GM12878 (cell line): ENCODE measurements at regions of chr12 and their contacts with region 1.

Region 1: DNA sequence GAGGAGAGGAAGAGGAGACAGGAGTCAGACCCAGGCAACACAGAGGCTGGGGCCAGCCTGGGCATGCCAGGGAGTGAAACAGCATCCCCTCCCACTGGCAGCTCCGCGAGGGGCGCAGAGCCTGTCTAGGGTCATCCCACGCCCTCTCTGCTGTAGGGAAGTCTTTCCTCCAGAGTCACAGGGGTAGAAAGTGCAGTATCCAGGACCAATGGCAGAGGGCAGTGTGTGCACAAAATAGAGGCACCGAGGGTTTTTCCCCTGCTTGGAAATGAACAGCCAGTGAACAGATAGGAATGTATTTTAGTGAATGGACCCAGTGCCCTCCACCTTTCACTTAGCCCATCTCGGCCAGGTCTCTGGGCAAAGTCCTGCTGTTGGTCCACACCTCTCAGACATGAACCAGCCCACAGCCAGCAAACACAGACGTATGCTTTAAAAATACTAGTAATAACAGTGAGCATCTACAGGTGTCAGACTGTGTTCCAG is 9.4 kb upstream of the KRT74 start:
- DNase-seq: no peak
- ATAC-seq: peak; percentile 90
- H3K4me3 ChIP-seq: no peak overlapping the region
- H3K27ac ChIP-seq: no peak overlapping the region
- H3K4me1 ChIP-seq: no peaks in the 10 kb centered on the region
- H3K27me3 ChIP-seq: peaks cover 0 to 5% of the 10 kb centered on the region in 2 experiments; a peak in 3 of 4 replicates
- CTCF ChIP-seq: peak; percentile 59 to 82 (median 66); a peak in 5 of 6 replicates
- EP300 ChIP-seq: no peak
- POLR2A ChIP-seq: no peak
- RAD21 ChIP-seq: peak; percentile 65

Region 2: GRCh38 chr12:52486166-52487105 is 96.6 kb before region 1 on chr12:
- CTCF ChIA-PET with region 1: no interaction called
- POLR2A ChIA-PET with region 1: no interaction called
- RAD21 ChIA-PET with region 1: no interaction called
- SMC1A ChIA-PET with region 1: no interaction called
- in situ Hi-C with region 1: no loop called
- intact Hi-C with region 1: no loop called
- DNase-seq: no peak
- ATAC-seq: no peak
- H3K4me3 ChIP-seq: no peak overlapping the region
- H3K27ac ChIP-seq: no peak overlapping the region
- H3K4me1 ChIP-seq: no peaks in the 10 kb centered on the region
- H3K27me3 ChIP-seq: no peaks in the 10 kb centered on the region; a peak in 2 of 4 replicates
- CTCF ChIP-seq: no peak
- EP300 ChIP-seq: no peak
- POLR2A ChIP-seq: no peak
- RAD21 ChIP-seq: no peak

Region 3: DNA sequence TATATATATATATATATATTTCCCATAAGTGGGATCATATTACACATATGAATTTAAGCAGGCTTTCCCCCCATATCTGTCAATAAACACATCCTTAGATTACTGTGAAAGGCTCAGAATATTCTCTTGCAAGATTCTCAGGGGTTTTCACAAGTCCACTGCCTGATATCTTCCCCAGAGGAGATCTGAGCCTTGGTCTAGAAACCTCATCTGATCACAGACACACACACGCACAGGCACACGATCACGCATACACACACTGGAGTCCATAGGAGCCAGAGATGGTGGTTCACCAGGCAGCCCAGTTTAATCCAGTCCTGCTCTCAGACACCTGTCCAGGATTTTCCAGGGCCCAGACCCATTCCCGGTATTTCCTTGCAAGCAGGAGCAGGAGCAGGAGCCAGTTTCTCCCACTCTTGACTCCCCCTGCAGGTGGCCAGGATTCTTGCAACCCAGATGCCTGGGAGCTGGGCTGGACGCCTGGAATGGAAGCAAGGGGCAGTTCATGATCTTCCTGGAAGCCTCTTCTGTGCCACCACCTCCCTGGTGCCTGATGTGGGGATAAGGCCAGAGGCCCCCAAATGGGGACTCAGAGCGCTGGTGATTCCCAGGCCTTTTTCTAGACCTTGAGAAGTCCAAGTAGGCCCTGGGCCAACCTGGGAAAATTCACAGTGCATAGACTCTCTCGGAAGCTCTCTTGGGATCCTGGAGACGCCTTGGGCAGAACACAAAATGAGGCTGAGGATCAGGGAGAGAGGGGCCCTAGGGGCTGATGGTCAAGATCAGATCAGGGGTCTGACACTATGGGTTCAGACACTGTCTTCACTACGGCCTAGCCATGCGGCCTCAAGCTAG is 282.3 kb after region 1 on chr12:
- CTCF ChIA-PET with region 1: interaction called, 12 read pairs
- POLR2A ChIA-PET with region 1: no interaction called
- RAD21 ChIA-PET with region 1: interaction called, 4 read pairs
- SMC1A ChIA-PET with region 1: no interaction called
- in situ Hi-C with region 1: loop called (anchors 10 kb)
- intact Hi-C with region 1: loop called (anchors 2 kb)
- DNase-seq: no peak
- ATAC-seq: peak; percentile 49; the same call in 2 of the 3 replicates
- H3K4me3 ChIP-seq: no peak overlapping the region
- H3K27ac ChIP-seq: no peak overlapping the region
- H3K4me1 ChIP-seq: peaks cover 4% of the 10 kb centered on the region
- H3K27me3 ChIP-seq: no peaks in the 10 kb centered on the region
- CTCF ChIP-seq: peak; percentile 51 to 71 (median 62)
- EP300 ChIP-seq: no peak
- POLR2A ChIP-seq: no peak
- RAD21 ChIP-seq: peak; percentile 48

Region 4: GRCh38 chr12:52870351-52871290 is 287.6 kb after region 1 on chr12:
- CTCF ChIA-PET with region 1: interaction called, 12 read pairs
- POLR2A ChIA-PET with region 1: no interaction called
- RAD21 ChIA-PET with region 1: interaction called, 4 read pairs
- SMC1A ChIA-PET with region 1: interaction called, 4 read pairs
- in situ Hi-C with region 1: loop called (anchors 10 kb)
- intact Hi-C with region 1: loop called (anchors 2 kb)
- DNase-seq: no peak
- ATAC-seq: peak; percentile 91
- H3K4me3 ChIP-seq: no peak overlapping the region
- H3K27ac ChIP-seq: no peak overlapping the region
- H3K4me1 ChIP-seq: peaks cover 6% of the 10 kb centered on the region
- H3K27me3 ChIP-seq: peaks cover 0 to 3% of the 10 kb centered on the region in 2 experiments; a peak in 2 of 4 replicates
- CTCF ChIP-seq: peak; percentile 79 to 83 (median 82)
- EP300 ChIP-seq: no peak
- POLR2A ChIP-seq: no peak
- RAD21 ChIP-seq: peak; percentile 77